Caco-2 (cell line): ENCODE measurements at regions of chr5 and their contacts with region 1.

Region 1: DNA sequence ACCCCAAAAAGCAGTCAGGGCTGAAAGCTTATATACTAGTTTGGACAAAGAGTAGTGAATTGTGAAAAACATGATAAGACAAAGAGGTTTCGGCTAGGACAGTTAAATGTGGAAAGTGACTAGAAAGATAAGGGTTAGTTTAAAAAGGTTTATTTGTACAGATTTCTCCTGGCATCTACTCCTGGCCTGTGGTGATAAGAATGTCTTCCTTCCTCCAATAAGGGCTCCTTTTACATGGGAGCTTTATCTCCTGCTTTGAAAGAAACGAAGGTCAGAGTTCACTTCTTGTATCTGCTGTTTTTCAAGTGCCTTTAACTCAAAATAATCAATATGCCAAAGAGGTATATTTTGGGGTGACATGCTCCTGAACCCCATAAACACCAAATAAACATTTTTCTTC is 776.1 kb upstream of the COX7C start:
- DNase-seq: peak in 1 of 2 experiments; percentile 6
- H3K4me3 ChIP-seq: no peak overlapping the region
- H3K4me3 Mint-ChIP-seq: no peak overlapping the region
- H3K27ac Mint-ChIP-seq: no peak overlapping the region
- H3K4me1 ChIP-seq: peaks cover 7% of the 10 kb centered on the region
- H3K4me1 Mint-ChIP-seq: peaks cover 12% of the 10 kb centered on the region
- H3K27me3 ChIP-seq: no peaks in the 10 kb centered on the region
- H3K27me3 Mint-ChIP-seq: no peaks in the 10 kb centered on the region
- CTCF ChIP-seq: no peak

Region 2: GRCh38 chr5:85814596-85814995 is 27.1 kb before region 1 on chr5:
- CTCF ChIA-PET with region 1: no interaction called
- POLR2A ChIA-PET with region 1: no interaction called
- intact Hi-C with region 1: loop called (anchors 1 kb)
- DNase-seq: peak; percentile 77 to 85
- H3K4me3 ChIP-seq: no peak overlapping the region
- H3K4me3 Mint-ChIP-seq: peak overlapping the region; percentile 1
- H3K27ac Mint-ChIP-seq: peak overlapping the region; percentile 40
- H3K4me1 ChIP-seq: peaks cover 15% of the 10 kb centered on the region
- H3K4me1 Mint-ChIP-seq: peaks cover 11% of the 10 kb centered on the region
- H3K27me3 ChIP-seq: no peaks in the 10 kb centered on the region
- H3K27me3 Mint-ChIP-seq: no peaks in the 10 kb centered on the region
- CTCF ChIP-seq: no peak

Region 3: DNA sequence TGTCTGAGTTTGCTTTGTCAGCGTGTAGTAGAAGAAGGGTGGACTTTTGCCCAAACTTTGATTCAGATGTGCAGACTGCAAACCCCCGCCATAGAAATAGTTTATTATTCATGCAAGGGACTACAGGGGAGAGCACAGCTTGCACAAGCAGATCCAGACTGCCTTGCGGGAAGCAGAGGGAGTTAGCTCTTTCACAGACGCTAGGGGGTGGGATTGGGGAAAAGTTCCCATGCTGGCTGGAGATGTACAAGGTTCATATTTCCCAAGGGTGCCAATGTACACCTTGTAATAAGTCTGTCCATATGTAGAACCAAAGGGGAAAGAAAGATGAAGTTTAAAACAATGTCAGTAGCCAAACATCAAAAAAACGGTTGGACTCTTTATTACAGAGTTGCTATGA is 26.4 kb after region 1 on chr5:
- CTCF ChIA-PET with region 1: no interaction called
- POLR2A ChIA-PET with region 1: no interaction called
- intact Hi-C with region 1: no loop called
- DNase-seq: peak in 1 of 2 experiments; percentile 24
- H3K4me3 ChIP-seq: no peak overlapping the region
- H3K4me3 Mint-ChIP-seq: no peak overlapping the region
- H3K27ac Mint-ChIP-seq: no peak overlapping the region
- H3K4me1 ChIP-seq: no peaks in the 10 kb centered on the region
- H3K4me1 Mint-ChIP-seq: no peaks in the 10 kb centered on the region
- H3K27me3 ChIP-seq: no peaks in the 10 kb centered on the region
- H3K27me3 Mint-ChIP-seq: no peaks in the 10 kb centered on the region
- CTCF ChIP-seq: no peak